ENCODE measurements at regions of chr18 and their contacts with region 1.

Region 1: DNA sequence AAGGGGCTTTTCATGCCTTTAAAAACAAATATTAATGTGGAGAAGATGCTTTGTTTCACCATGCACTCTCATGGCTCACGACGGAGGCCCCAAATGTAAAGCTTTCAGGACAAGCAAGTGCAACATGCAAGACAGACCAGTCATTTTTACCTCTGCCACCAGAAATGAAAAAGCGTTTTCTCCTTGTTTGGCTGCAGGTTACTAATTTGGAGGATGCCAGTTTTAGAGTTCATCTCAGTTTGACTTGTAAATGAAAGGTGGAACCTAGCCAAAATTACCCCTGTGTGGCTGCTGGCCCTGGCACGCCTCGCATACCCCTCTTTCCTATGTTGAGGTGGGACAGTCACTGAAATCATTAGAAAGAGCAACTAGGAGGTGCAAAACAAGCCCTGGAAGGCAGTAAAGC is 138.6 kb downstream of the BCL2 start:
- DNase-seq: no peak

Region 2: GRCh38 chr18:63224630-63225029 is 43.7 kb after region 1 on chr18:
- intact Hi-C with region 1: loop called in 1 of 2 experiments (anchors 5 kb)
- DNase-seq: no peak

Measured in posterior vena cava (tissue), 2 donors.